Activated CD8-positive, alpha-beta T cell treated with anti-CD3 and anti-CD28 coated beads, Interleukin-2, amount 10 ng/mL, durations not matched to agents 7 days and 5 days (primary cell): ENCODE measurements at regions of chr1 and their contacts with region 1.

Region 1: DNA sequence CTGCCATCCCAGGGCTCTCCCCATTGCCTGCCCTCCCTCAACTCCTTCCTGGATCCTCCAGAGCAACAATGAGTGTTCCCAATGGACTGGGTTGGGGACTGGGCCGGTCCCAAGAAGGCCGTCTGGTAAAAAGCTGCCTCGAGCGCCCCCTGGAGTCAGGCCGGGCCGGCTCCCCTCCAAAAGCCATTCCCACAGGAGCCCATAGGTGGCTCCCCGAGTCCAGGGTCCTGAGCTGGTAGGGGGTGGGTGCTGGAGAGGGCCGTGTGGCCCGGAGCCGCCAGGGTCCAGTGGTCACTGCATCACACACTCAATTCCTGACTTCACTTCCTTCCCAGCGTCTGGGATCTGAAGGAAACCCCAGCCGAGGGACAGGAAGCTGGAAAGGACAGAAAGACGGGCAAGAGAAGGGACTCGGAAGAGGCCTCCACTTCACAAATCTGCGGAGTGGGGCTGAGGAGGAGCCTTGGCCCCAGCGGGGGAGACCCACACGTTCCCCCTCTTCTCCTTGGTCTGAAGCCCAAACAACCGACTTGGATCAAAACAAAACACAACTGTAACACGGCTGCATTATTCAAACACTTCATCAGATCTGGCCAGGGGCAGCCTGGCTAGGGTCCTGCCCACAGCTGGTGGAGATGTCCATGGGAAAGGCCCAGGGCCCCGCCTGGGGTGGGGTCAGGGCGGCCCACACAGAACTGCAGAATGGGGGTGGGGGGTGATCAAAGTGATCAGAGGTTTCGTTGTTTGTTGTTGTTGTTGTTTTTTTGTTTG is 10.9 kb upstream of the ALDH4A1 start:
- DNase-seq: peak; percentile 74
- ATAC-seq: peak; percentile 93
- H3K4me3 Mint-ChIP-seq: no peak overlapping the region
- H3K27ac Mint-ChIP-seq: no peak overlapping the region
- H3K4me1 Mint-ChIP-seq: peaks cover 4% of the 10 kb centered on the region
- H3K27me3 Mint-ChIP-seq: no peaks in the 10 kb centered on the region

Region 2: DNA sequence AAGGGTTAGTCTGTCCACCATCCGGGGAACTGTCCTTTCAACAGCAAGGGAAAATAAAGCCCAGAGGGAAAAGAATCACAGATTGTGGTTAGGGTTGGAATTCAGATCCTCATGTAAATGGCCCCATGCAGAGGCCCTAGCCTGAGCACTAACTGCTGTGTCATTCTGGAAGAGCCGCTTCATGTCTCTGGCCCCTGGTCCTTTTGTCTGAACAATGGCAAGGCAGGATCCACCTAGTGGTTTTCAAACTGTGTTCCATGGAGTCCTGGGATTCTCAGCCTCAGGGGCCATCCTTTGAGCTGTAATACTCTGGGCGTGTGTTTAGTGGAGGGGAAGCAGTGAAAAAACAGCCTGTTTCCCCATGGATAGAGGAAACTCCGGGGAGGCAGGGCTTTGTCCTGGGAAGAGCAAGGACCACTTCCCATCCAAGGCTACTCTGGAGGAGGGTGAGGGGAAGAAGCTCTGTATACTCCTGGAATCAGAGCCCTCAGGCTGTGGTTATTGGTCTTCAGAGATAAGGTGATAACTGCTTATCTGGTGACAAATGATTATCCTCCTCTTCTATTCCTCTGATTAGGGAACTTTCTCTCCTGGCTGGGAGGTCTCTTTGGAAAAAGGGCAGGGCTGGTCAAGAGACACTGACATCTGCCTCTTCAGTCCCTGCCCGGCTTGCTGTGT is 263.4 kb before region 1 on chr1:
- CTCF ChIA-PET with region 1: no interaction called
- POLR2A ChIA-PET with region 1: no interaction called
- DNase-seq: no peak
- ATAC-seq: no peak
- H3K4me3 Mint-ChIP-seq: no peak overlapping the region
- H3K27ac Mint-ChIP-seq: no peak overlapping the region
- H3K4me1 Mint-ChIP-seq: peaks cover 28% of the 10 kb centered on the region
- H3K27me3 Mint-ChIP-seq: peaks cover 70% of the 10 kb centered on the region

Region 3: GRCh38 chr1:18875107-18875795 is 38.0 kb before region 1 on chr1:
- CTCF ChIA-PET with region 1: no interaction called
- POLR2A ChIA-PET with region 1: no interaction called
- DNase-seq: peak; percentile 75
- ATAC-seq: peak; percentile 79
- H3K4me3 Mint-ChIP-seq: no peak overlapping the region
- H3K27ac Mint-ChIP-seq: no peak overlapping the region
- H3K4me1 Mint-ChIP-seq: no peaks in the 10 kb centered on the region
- H3K27me3 Mint-ChIP-seq: no peaks in the 10 kb centered on the region

Region 4: GRCh38 chr1:18949686-18950400 is 36.6 kb after region 1 on chr1:
- CTCF ChIA-PET with region 1: interaction called, 54 read pairs
- POLR2A ChIA-PET with region 1: interaction called, 3 read pairs
- DNase-seq: peak; percentile 41
- ATAC-seq: no peak
- H3K4me3 Mint-ChIP-seq: peak overlapping the region; percentile 71
- H3K27ac Mint-ChIP-seq: peak overlapping the region; percentile 94
- H3K4me1 Mint-ChIP-seq: peaks cover 86% of the 10 kb centered on the region
- H3K27me3 Mint-ChIP-seq: peaks cover 17% of the 10 kb centered on the region

Region 5: GRCh38 chr1:18965206-18966173 is 52.2 kb after region 1 on chr1:
- CTCF ChIA-PET with region 1: interaction called, 13 read pairs
- POLR2A ChIA-PET with region 1: no interaction called
- DNase-seq: no peak
- ATAC-seq: no peak
- H3K4me3 Mint-ChIP-seq: no peak overlapping the region
- H3K27ac Mint-ChIP-seq: no peak overlapping the region
- H3K4me1 Mint-ChIP-seq: no peaks in the 10 kb centered on the region
- H3K27me3 Mint-ChIP-seq: peaks cover 24% of the 10 kb centered on the region

Region 6: DNA sequence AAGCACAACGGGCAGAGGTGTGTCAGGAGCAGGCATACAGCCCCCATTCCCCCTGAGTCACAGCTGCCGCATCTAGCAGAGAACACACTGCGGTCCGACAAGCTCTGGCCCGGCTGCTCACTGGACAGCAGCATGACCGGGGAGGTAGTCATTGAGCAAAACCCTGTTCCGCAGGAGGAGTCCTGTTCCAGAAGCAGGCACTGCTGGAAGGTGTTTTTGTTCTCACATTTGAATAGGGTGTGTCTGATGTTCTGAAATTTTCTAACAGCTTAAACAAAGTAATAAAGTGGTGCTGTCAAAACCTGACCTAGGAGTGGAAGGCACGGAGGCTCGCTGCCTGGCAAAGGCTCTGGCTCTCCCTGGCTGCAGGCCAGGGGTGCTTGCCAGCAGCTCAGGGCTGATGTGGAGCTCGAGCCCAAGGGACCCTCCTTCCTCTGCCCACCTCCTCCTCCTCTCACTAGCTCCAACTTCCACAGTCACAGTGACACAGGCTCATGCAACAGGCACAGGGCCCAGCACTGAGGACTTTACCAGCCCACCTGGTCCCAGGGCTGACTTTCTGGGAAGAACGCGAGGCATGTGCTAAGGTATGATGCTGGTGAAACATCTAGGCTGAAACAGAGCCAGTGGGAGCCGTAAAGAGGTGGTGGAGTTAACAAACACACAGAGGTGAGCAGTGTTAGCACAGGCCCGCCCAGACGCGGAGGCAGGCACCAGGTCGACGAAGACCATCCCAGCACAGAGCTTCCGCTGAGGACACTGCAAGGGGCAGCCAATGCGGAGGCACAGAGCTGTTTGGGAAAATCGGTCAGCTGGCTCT is 161.9 kb after region 1 on chr1:
- CTCF ChIA-PET with region 1: interaction called, 48 read pairs
- POLR2A ChIA-PET with region 1: no interaction called
- DNase-seq: no peak
- ATAC-seq: no peak
- H3K4me3 Mint-ChIP-seq: no peak overlapping the region
- H3K27ac Mint-ChIP-seq: peak overlapping the region; percentile 78
- H3K4me1 Mint-ChIP-seq: peaks cover 34% of the 10 kb centered on the region
- H3K27me3 Mint-ChIP-seq: peaks cover 6% of the 10 kb centered on the region

Region 7: GRCh38 chr1:19096036-19096833 is 183.0 kb after region 1 on chr1:
- CTCF ChIA-PET with region 1: interaction called, 15 read pairs
- POLR2A ChIA-PET with region 1: no interaction called
- DNase-seq: peak; percentile 32
- ATAC-seq: no peak
- H3K4me3 Mint-ChIP-seq: no peak overlapping the region
- H3K27ac Mint-ChIP-seq: no peak overlapping the region
- H3K4me1 Mint-ChIP-seq: no peaks in the 10 kb centered on the region
- H3K27me3 Mint-ChIP-seq: no peaks in the 10 kb centered on the region